ENCODE measurements at regions of chr19 and their contacts with region 1.

Region 1: DNA sequence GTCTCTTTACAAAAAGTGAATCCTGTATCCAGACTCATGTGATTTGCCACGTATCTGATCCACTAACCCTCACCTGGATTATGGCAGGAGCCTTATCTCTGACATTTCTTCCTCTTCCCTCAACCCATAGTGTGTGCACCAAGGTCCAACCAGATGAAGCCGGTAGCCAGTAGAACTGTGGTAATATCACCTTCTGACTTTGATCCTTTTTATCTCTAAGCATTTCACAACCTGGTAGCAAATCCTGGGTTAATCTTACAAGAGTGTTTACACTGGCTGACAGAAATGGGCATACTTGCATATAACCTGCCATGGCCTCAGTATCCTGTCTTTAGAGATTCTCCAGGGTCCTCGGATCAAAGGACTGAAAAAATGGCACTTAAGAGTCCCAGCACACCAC is 1.9 kb downstream of the ZNF417 start:
- DNase-seq: no peak
- H3K4me3 Mint-ChIP-seq: no peak overlapping the region
- H3K27ac Mint-ChIP-seq: no peak overlapping the region
- H3K4me1 Mint-ChIP-seq: peaks cover 22% of the 10 kb centered on the region
- H3K27me3 Mint-ChIP-seq: no peaks in the 10 kb centered on the region

Region 2: DNA sequence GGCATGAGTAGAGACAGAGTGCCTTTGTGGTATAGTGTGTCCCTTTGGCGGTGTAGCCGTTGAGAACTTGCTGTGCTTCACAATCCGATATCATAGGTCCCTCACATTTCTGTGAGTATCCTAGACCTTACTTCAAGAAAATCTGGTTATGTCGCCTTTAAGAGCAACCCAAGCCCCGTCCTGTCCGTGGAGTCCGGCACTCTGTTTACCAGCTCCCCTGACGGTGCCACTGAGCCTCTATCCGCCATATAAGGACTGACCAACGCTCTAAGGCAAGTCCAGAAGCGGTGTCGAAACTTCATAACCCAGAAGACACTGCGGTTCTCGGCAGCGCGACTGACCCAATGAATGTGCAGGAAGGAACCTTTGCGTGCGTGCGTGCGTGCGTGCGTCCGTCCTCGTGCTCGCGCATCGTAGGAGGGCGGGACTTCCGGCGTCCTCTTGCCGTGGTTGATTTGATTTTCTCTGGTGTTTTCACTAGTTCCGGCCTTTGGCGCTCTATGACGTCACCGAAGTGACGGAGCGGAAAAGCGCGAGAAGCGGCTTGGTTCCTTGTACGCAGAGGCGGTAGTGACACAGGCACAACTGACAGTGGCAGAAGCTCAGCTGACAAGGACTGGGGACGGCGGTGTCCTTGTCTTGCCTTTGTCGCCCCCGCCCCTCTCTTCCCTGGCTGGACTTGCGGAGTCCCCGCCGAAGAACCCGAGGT is 551.4 kb before region 1 on chr19 and contains the starts of genes TRAPPC2B and ZNF547:
- CTCF ChIA-PET with region 1: no interaction called
- intact Hi-C with region 1: loop called (anchors 1 kb)
- DNase-seq: peak; percentile 97
- H3K4me3 Mint-ChIP-seq: peak within 1 kb of the TSS; percentile 85
- H3K27ac Mint-ChIP-seq: peak within 1 kb of the TSS; percentile 89
- H3K4me1 Mint-ChIP-seq: peaks cover 11% of the 10 kb centered on the region
- H3K27me3 Mint-ChIP-seq: no peaks in the 10 kb centered on the region
- total RNA-seq, gene TRAPPC2B: 3.1 to 3.4 TPM
- total RNA-seq, gene ZNF547: 0.84 to 1.3 TPM

Region 3: GRCh38 chr19:57578487-57579205 is 335.9 kb before region 1 on chr19 and contains the start of gene ZNF416:
- CTCF ChIA-PET with region 1: no interaction called
- intact Hi-C with region 1: loop called (anchors 1 kb)
- DNase-seq: peak; percentile 98
- H3K4me3 Mint-ChIP-seq: peak within 1 kb of the TSS; percentile 75
- H3K27ac Mint-ChIP-seq: peak within 1 kb of the TSS; percentile 84
- H3K4me1 Mint-ChIP-seq: peaks cover 22% of the 10 kb centered on the region
- H3K27me3 Mint-ChIP-seq: no peaks in the 10 kb centered on the region
- total RNA-seq, gene ZNF416: 1.5 to 2.0 TPM

Region 4: GRCh38 chr19:57769345-57770131 is 145.0 kb before region 1 on chr19 and contains the start of gene ZNF586:
- CTCF ChIA-PET with region 1: no interaction called
- intact Hi-C with region 1: loop called (anchors 1 kb)
- DNase-seq: peak; percentile 93
- H3K4me3 Mint-ChIP-seq: peak within 1 kb of the TSS; percentile 91
- H3K27ac Mint-ChIP-seq: peak within 1 kb of the TSS; percentile 89
- H3K4me1 Mint-ChIP-seq: peaks cover 34% of the 10 kb centered on the region
- H3K27me3 Mint-ChIP-seq: no peaks in the 10 kb centered on the region
- total RNA-seq, gene ZNF586: 14.5 to 14.9 TPM

Region 5: GRCh38 chr19:57888560-57889231 is 25.8 kb before region 1 on chr19 and contains the start of gene ZNF814:
- CTCF ChIA-PET with region 1: interaction called, 4 read pairs
- intact Hi-C with region 1: loop called (anchors 1 kb)
- DNase-seq: peak; percentile 91
- H3K4me3 Mint-ChIP-seq: peak within 1 kb of the TSS; percentile 86
- H3K27ac Mint-ChIP-seq: peak within 1 kb of the TSS; percentile 72
- H3K4me1 Mint-ChIP-seq: peaks cover 21% of the 10 kb centered on the region
- H3K27me3 Mint-ChIP-seq: no peaks in the 10 kb centered on the region
- total RNA-seq, gene ZNF814: 12.7 to 13.3 TPM

Region 6: DNA sequence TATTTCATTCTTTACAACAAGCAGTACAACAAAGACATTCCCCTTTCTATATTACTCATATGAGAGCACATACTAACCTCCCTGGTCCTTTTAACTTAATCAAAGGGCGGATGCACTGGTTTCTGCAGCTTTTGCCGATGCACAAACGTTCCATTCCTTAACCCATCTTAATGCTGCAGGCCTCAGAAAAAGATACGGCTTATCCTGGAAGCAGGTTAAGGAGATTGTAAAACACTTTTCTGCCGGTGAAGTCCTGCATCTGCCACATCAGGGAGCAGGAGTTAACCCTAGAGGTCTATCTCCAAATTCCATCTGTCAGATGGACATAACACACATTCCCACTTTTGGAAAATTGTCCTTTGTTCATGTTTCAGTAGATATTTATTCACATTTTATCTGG is 14.2 kb before region 1 on chr19:
- CTCF ChIA-PET with region 1: no interaction called
- intact Hi-C with region 1: no loop called
- DNase-seq: no peak
- H3K4me3 Mint-ChIP-seq: no peak overlapping the region
- H3K27ac Mint-ChIP-seq: no peak overlapping the region
- H3K4me1 Mint-ChIP-seq: peaks cover 5% of the 10 kb centered on the region
- H3K27me3 Mint-ChIP-seq: no peaks in the 10 kb centered on the region